ENCODE measurements at regions of chr6 and their contacts with region 1.

Region 1: GRCh38 chr6:129893640-129894039 is 32.5 kb upstream of the TMEM244 start:
- DNase-seq: no peak
- H3K4me3 ChIP-seq: no peak overlapping the region
- H3K4me3 Mint-ChIP-seq: no peak overlapping the region
- H3K27ac Mint-ChIP-seq: no peak overlapping the region
- H3K4me1 ChIP-seq: no peaks in the 10 kb centered on the region
- H3K4me1 Mint-ChIP-seq: no peaks in the 10 kb centered on the region
- H3K27me3 ChIP-seq: no peaks in the 10 kb centered on the region
- H3K27me3 Mint-ChIP-seq: no peaks in the 10 kb centered on the region
- CTCF ChIP-seq: peak; percentile 26 to 40

Region 2: DNA sequence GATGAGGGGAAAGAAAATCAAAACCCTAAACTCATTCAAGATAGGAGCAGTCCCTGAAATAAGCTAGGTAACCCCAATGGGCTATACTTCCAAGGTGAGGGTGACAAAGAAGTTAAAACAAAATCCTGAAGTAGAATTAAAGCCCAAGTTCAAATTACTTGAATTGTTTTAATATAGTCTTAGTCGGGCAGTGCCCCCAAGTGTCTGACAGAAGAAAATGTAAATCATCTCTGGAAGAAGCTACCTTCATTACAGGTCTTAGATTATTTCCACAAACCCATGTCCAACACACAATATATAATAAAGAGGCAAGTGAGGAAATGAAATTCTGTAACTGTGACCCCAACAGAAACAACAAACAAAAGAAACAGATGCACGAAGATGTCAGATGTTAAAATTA is 88.0 kb after region 1 on chr6:
- CTCF ChIA-PET with region 1: no interaction called
- POLR2A ChIA-PET with region 1: no interaction called
- intact Hi-C with region 1: loop called (anchors 1 kb)
- DNase-seq: no peak
- H3K4me3 ChIP-seq: no peak overlapping the region
- H3K4me3 Mint-ChIP-seq: no peak overlapping the region
- H3K27ac Mint-ChIP-seq: no peak overlapping the region
- H3K4me1 ChIP-seq: no peaks in the 10 kb centered on the region
- H3K4me1 Mint-ChIP-seq: no peaks in the 10 kb centered on the region
- H3K27me3 ChIP-seq: no peaks in the 10 kb centered on the region
- H3K27me3 Mint-ChIP-seq: no peaks in the 10 kb centered on the region
- CTCF ChIP-seq: peak; percentile 23 to 31

Region 3: GRCh38 chr6:130105996-130106704 is 212.5 kb after region 1 on chr6:
- CTCF ChIA-PET with region 1: no interaction called
- POLR2A ChIA-PET with region 1: no interaction called
- intact Hi-C with region 1: no loop called
- DNase-seq: no peak
- H3K4me3 ChIP-seq: no peak overlapping the region
- H3K4me3 Mint-ChIP-seq: no peak overlapping the region
- H3K27ac Mint-ChIP-seq: no peak overlapping the region
- H3K4me1 ChIP-seq: no peaks in the 10 kb centered on the region
- H3K4me1 Mint-ChIP-seq: no peaks in the 10 kb centered on the region
- H3K27me3 ChIP-seq: no peaks in the 10 kb centered on the region
- H3K27me3 Mint-ChIP-seq: no peaks in the 10 kb centered on the region
- CTCF ChIP-seq: no peak